ENCODE measurements at regions of chr15 and their contacts with region 1.

Region 1: GRCh38 chr15:65032801-65033537 is 3.5 kb upstream of the MTFMT start:
- DNase-seq: peak; percentile 56
- ATAC-seq: peak; percentile 38
- H3K4me3 Mint-ChIP-seq: no peak overlapping the region
- H3K27ac Mint-ChIP-seq: no peak overlapping the region
- H3K4me1 Mint-ChIP-seq: peaks cover 20% of the 10 kb centered on the region
- H3K27me3 Mint-ChIP-seq: peaks cover 23% of the 10 kb centered on the region

Region 2: DNA sequence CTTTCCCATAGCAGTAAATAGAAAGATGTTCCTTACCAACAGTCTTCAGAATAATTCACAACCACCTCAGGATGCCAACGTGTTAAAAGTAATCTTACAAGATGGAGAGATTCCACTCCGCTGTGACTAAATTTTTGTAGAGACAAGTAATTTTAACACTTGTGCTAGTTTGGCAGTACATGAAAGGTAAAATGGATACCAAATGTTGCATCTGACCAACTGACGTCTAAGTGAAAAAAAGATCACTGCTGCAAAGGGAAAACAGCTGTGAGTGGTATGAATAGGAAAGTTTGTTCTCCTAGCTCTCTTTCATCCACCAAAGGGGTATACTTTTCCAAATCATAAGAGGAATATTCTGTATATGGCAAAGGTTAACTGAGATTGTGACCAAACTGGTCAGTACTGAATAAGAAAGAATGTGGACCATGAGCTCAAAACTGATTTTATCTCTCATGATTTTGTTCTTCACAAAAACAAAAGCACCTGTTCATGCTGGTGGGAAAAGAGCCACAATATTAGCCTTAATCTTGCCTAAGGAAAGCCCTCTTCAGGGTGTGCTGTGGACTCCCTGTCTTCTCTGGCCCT is 45.7 kb before region 1 on chr15:
- CTCF ChIA-PET with region 1: interaction called, 11 read pairs
- POLR2A ChIA-PET with region 1: no interaction called
- DNase-seq: no peak
- ATAC-seq: no peak
- H3K4me3 Mint-ChIP-seq: no peak overlapping the region
- H3K27ac Mint-ChIP-seq: no peak overlapping the region
- H3K4me1 Mint-ChIP-seq: peaks cover 54% of the 10 kb centered on the region
- H3K27me3 Mint-ChIP-seq: no peaks in the 10 kb centered on the region

Region 3: DNA sequence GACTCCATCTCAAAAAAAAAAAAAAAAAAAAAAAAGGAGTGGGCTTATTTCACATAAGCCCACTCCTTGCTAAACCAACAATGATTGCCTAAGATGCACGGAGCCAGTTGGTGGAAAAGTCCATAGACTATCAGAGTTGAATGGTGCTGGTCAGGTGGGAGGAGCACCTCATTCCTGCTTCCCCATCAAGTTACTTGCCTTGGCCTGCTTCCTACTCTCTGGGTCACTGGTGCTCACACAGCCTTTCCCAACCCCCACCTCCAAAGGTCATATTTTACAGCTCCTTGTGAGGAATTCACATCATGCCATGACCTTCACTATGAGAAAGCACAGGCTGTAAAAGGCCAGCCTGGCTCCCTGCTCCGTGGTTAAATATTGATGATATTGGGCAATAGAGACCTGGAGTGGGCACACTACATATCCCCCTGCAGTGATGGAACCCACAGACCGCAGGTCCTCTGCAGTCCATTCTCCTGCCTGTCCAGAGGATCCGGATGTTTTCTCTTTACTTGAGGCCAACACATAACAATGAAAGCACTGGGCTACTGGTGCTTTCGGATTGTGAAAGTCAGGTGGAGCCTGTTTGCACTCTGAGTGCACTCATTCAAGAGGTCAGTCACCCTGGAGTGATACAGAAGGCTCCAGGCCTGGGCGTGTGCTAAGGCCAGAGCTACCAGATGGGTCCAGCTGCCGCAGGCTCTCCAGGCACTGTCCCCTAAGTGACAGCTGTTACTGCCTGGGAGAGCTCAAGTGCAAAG is 11.9 kb after region 1 on chr15 and contains the start of gene SLC51B:
- CTCF ChIA-PET with region 1: interaction called, 23 read pairs
- POLR2A ChIA-PET with region 1: no interaction called
- DNase-seq: no peak
- ATAC-seq: no peak
- H3K4me3 Mint-ChIP-seq: no peak within 1 kb of the TSS
- H3K27ac Mint-ChIP-seq: no peak within 1 kb of the TSS
- H3K4me1 Mint-ChIP-seq: peaks cover 10% of the 10 kb centered on the region
- H3K27me3 Mint-ChIP-seq: peaks cover 3% of the 10 kb centered on the region
- total RNA-seq, gene SLC51B: not detected

Region 4: GRCh38 chr15:65077981-65078352 is 45.0 kb after region 1 on chr15:
- CTCF ChIA-PET with region 1: interaction called, 23 read pairs
- POLR2A ChIA-PET with region 1: no interaction called
- DNase-seq: peak; percentile 61
- ATAC-seq: peak; percentile 84
- H3K4me3 Mint-ChIP-seq: no peak overlapping the region
- H3K27ac Mint-ChIP-seq: no peak overlapping the region
- H3K4me1 Mint-ChIP-seq: peaks cover 21% of the 10 kb centered on the region
- H3K27me3 Mint-ChIP-seq: peaks cover 40% of the 10 kb centered on the region